HepG2 (cell line): ENCODE measurements at regions of chr4 and their contacts with region 1.

Region 1: GRCh38 chr4:165343353-165344191 is 16.1 kb downstream of the MSMO1 start:
- DNase-seq: peak; percentile 24
- ATAC-seq: peak; percentile 23
- H3K4me3 ChIP-seq: no peak overlapping the region
- H3K27ac ChIP-seq: no peak overlapping the region
- H3K4me1 ChIP-seq: peaks cover 8% of the 10 kb centered on the region; the same call in 1 of the 2 replicates
- H3K27me3 ChIP-seq: no peaks in the 10 kb centered on the region
- CTCF ChIP-seq: peak; percentile 62
- EP300 ChIP-seq: no peak
- POLR2A ChIP-seq: peak; percentile 43 to 48; a peak in 3 of 4 replicates
- RAD21 ChIP-seq: peak; percentile 45; the same call in 1 of the 2 replicates

Region 2: DNA sequence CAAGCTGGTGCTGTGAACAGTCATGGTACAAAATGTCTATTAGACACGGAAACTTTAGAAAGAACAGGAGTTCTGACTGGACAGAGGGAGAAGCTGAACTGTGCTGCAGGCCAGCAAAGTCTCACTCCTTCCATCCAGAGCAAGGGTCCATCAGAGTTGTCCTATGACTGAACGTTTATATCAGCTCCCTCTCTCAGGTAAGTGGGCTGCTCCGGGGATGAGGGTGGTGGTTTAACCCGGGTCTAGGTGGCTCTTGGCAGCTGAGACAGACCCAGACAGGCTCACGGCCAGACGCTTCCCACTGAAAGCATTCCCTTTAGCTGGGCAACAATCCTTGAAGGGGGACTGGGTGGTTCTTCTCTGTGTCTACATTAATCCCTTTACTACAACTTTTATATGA is 974.7 kb before region 1 on chr4:
- CTCF ChIA-PET with region 1: no interaction called
- POLR2A ChIA-PET with region 1: no interaction called
- in situ Hi-C with region 1: no loop called
- intact Hi-C with region 1: no loop called
- DNase-seq: no peak
- ATAC-seq: no peak
- H3K4me3 ChIP-seq: no peak overlapping the region
- H3K27ac ChIP-seq: no peak overlapping the region
- H3K4me1 ChIP-seq: no peaks in the 10 kb centered on the region
- H3K27me3 ChIP-seq: no peaks in the 10 kb centered on the region
- CTCF ChIP-seq: no peak
- EP300 ChIP-seq: no peak
- POLR2A ChIP-seq: no peak
- RAD21 ChIP-seq: no peak

Region 3: DNA sequence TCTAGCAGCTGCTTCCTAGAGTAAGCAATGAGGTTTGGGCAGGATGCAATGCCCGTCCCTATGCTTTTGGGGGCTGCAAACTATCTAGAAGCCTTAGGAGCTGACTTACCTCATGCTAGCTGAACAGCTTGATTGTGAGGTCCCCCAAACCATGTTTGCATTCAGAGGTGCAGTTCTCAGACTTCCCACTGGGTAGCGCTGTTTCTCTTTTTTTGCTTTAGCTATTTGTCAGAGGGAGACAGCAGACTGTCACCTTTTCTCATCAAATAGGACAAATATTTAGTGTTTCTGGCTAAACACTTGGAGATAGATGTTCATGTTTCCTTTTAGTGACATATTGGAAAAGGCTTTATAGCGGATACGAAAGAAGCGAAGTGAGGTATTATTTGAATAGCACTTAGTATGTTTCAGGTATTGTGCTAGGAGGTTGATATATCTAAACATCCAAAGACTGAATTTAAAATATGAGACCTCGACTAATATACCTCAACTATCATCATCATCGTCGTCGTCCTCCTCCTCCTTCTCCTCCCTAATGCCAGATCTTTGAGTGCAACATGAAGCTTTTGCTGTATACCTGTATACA is 212.2 kb before region 1 on chr4:
- CTCF ChIA-PET with region 1: interaction called, 24 read pairs
- POLR2A ChIA-PET with region 1: interaction called, 3 read pairs
- in situ Hi-C with region 1: loop called (anchors 5 kb)
- intact Hi-C with region 1: loop called (anchors 1 kb)
- DNase-seq: peak; percentile 57
- ATAC-seq: peak; percentile 93
- H3K4me3 ChIP-seq: no peak overlapping the region
- H3K27ac ChIP-seq: no peak overlapping the region
- H3K4me1 ChIP-seq: peaks cover 15% of the 10 kb centered on the region
- H3K27me3 ChIP-seq: peaks cover 0 to 11% of the 10 kb centered on the region in 2 experiments; a peak in 2 of 5 replicates
- CTCF ChIP-seq: peak; percentile 85
- EP300 ChIP-seq: no peak
- POLR2A ChIP-seq: no peak
- RAD21 ChIP-seq: peak; percentile 82

Region 4: DNA sequence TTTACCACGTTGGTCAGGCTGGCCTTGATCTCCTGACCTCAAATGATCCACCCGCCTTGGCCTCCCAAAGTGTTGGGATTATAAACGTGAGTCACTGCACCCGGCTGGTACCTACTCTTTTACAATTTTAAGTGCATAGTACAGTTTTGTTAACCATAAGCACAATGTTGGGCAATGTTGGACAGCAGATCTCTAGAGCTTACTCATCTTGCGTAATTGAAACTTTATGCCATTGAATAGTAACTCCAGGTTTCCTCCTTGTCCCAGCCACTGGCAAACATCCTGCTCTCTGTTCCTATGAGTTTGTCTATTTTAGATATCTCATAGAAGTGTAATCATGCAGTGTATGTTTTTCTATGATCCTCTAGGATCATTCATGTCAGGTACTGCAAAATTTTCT is 25.9 kb after region 1 on chr4:
- CTCF ChIA-PET with region 1: no interaction called
- POLR2A ChIA-PET with region 1: no interaction called
- in situ Hi-C with region 1: no loop called
- intact Hi-C with region 1: no loop called
- DNase-seq: peak; percentile 99
- ATAC-seq: peak; percentile 96
- H3K4me3 ChIP-seq: peak overlapping the region in 1 of 3 experiments; percentile 34; a peak in 1 of 6 replicates
- H3K27ac ChIP-seq: peak overlapping the region; percentile 68
- H3K4me1 ChIP-seq: peaks cover 77% of the 10 kb centered on the region
- H3K27me3 ChIP-seq: no peaks in the 10 kb centered on the region
- CTCF ChIP-seq: no peak
- EP300 ChIP-seq: peak; percentile 89 to 93; a peak in 3 of 4 replicates
- POLR2A ChIP-seq: no peak
- RAD21 ChIP-seq: no peak